ENCODE measurements at regions of chr5 and their contacts with region 1.

Region 1: DNA sequence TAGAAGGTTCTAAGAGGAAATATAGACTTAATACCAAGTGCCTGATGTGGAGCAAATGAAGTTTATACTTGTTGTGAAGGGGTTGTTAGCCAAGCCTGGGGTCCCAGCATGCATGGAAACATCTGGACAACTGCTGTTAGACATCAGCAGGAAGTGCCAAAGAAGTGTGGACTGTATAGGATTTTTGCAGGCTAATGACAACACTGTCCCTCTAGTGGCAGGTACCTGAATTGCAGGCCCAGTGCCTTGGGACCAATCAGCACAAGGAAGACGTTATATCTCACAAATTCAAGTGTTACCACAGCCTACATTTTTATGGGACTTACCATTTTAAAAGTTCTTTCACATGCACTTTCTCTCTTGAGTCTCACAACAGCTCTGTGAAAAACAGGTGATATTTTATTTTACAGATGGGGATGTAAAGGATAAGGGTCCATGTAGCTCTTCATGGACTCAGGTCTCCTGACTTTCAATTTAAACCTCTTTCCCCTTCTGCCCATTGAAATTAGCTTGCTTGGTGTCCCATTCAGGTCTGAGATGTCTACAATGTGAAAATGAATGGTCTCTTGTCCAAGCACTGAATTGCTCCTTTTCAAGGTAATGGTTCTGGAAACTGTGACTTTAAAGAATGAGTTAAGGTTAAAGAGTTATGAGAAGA is 89.0 kb upstream of the MAP1B start:
- DNase-seq: peak; percentile 72
- H3K4me3 ChIP-seq: no peak overlapping the region
- H3K27ac ChIP-seq: no peak overlapping the region
- H3K4me1 ChIP-seq: no peaks in the 10 kb centered on the region
- H3K27me3 ChIP-seq: peaks cover 0 to 7% (median 0%) of the 10 kb centered on the region in 7 donors
- CTCF ChIP-seq: peak; percentile 83 to 96 (median 93)
- POLR2A ChIP-seq: no peak

Region 2: GRCh38 chr5:71782771-71783770 is 235.2 kb before region 1 on chr5:
- intact Hi-C with region 1: loop called (anchors 5 kb)
- DNase-seq: peak; percentile 77
- H3K4me3 ChIP-seq: peak overlapping the region in 3 of 8 donors; percentile 4 to 48 (median 22)
- H3K27ac ChIP-seq: no peak overlapping the region
- H3K4me1 ChIP-seq: peaks cover 0 to 21% (median 14%) of the 10 kb centered on the region in 6 donors
- H3K27me3 ChIP-seq: no peaks in the 10 kb centered on the region
- CTCF ChIP-seq: peak in 10 of 11 experiments; percentile 12 to 70 (median 61)
- POLR2A ChIP-seq: no peak